MCF 10A (cell line): ENCODE measurements at regions of chr1 and their contacts with region 1.

Region 1: DNA sequence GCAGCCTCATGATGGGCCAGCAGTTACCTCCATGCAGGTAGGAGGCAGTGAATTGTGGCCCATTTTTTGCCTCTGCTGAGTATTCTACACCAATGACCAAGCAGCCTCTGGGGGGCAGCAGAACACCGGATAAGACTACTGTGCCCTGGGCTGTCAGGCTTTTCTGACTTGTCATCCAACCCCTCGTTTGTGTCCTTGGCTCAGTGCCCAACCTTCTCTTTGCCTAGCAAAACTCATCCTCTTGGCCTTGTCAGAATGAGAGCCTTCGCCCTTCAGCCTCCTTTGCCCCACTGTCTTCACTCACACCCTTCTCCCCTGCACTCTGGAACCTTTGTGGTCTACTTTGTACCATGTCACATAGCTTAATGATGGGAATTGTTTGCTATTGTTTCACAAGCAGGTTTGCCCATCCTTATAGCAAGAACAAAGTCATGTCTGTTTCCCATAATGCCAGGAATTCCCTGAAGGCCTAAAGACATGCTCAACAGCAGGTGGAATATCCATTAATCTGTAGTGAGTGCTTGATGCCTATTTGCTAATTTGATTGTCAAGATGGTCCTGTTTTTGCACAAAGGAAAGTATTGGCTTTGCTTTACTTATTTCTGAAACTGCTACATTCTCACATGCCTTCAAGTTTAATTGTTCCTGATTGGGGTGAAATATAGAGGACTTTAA is 255.9 kb downstream of the HHAT start:
- DNase-seq: peak; percentile 97
- H3K4me3 Mint-ChIP-seq: no peak overlapping the region
- H3K27ac Mint-ChIP-seq: no peak overlapping the region
- H3K4me1 Mint-ChIP-seq: peaks cover 6% of the 10 kb centered on the region
- H3K27me3 Mint-ChIP-seq: no peaks in the 10 kb centered on the region
- CTCF ChIP-seq: peak; percentile 100

Region 2: GRCh38 chr1:210448297-210448892 is 136.2 kb before region 1 on chr1:
- CTCF ChIA-PET with region 1: interaction called, 92 read pairs
- POLR2A ChIA-PET with region 1: interaction called, 3 read pairs
- intact Hi-C with region 1: loop called (anchors 1 kb)
- DNase-seq: peak; percentile 71
- H3K4me3 Mint-ChIP-seq: no peak overlapping the region
- H3K27ac Mint-ChIP-seq: no peak overlapping the region
- H3K4me1 Mint-ChIP-seq: peaks cover 11% of the 10 kb centered on the region
- H3K27me3 Mint-ChIP-seq: peaks cover 52% of the 10 kb centered on the region
- CTCF ChIP-seq: peak; percentile 93

Region 3: GRCh38 chr1:210607361-210607760 is 22.8 kb after region 1 on chr1:
- CTCF ChIA-PET with region 1: no interaction called
- POLR2A ChIA-PET with region 1: no interaction called
- intact Hi-C with region 1: no loop called
- DNase-seq: no peak
- H3K4me3 Mint-ChIP-seq: no peak overlapping the region
- H3K27ac Mint-ChIP-seq: no peak overlapping the region
- H3K4me1 Mint-ChIP-seq: peaks cover 5% of the 10 kb centered on the region
- H3K27me3 Mint-ChIP-seq: no peaks in the 10 kb centered on the region
- CTCF ChIP-seq: no peak

Region 4: GRCh38 chr1:210711825-210712612 is 127.4 kb after region 1 on chr1:
- CTCF ChIA-PET with region 1: interaction called, 4 read pairs
- POLR2A ChIA-PET with region 1: no interaction called
- intact Hi-C with region 1: loop called (anchors 10 kb)
- DNase-seq: peak; percentile 39
- H3K4me3 Mint-ChIP-seq: no peak overlapping the region
- H3K27ac Mint-ChIP-seq: no peak overlapping the region
- H3K4me1 Mint-ChIP-seq: peaks cover 6% of the 10 kb centered on the region
- H3K27me3 Mint-ChIP-seq: no peaks in the 10 kb centered on the region
- CTCF ChIP-seq: peak; percentile 25

Region 5: DNA sequence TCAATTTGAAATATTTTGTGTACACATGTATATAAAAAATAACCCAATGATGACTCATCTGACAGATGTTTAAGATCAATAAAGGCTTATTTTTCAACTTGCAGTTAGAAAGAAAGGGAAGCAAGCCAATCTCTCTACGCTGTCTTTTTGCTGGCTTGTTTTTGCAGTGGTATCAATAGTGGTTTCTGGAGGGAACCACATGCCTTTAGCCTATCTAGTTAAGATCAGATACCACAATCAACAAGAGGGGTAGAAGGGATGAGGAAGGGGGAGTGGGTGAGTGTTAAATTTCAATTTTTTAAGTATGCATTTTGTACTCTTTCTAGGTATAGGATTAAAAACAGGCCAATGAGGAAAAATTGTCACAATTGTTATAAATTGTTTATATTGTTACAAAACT is 273.1 kb after region 1 on chr1:
- CTCF ChIA-PET with region 1: no interaction called
- POLR2A ChIA-PET with region 1: no interaction called
- intact Hi-C with region 1: no loop called
- DNase-seq: no peak
- H3K4me3 Mint-ChIP-seq: no peak overlapping the region
- H3K27ac Mint-ChIP-seq: no peak overlapping the region
- H3K4me1 Mint-ChIP-seq: no peaks in the 10 kb centered on the region
- H3K27me3 Mint-ChIP-seq: no peaks in the 10 kb centered on the region
- CTCF ChIP-seq: no peak

Region 6: GRCh38 chr1:211009944-211010343 is 425.4 kb after region 1 on chr1:
- CTCF ChIA-PET with region 1: interaction called, 6 read pairs
- POLR2A ChIA-PET with region 1: no interaction called
- intact Hi-C with region 1: loop called (anchors 5 kb)
- DNase-seq: no peak
- H3K4me3 Mint-ChIP-seq: no peak overlapping the region
- H3K27ac Mint-ChIP-seq: no peak overlapping the region
- H3K4me1 Mint-ChIP-seq: no peaks in the 10 kb centered on the region
- H3K27me3 Mint-ChIP-seq: peaks cover 15% of the 10 kb centered on the region
- CTCF ChIP-seq: no peak

Region 7: GRCh38 chr1:211145944-211146343 is 561.4 kb after region 1 on chr1:
- CTCF ChIA-PET with region 1: interaction called, 10 read pairs
- POLR2A ChIA-PET with region 1: no interaction called
- intact Hi-C with region 1: no loop called
- DNase-seq: peak; percentile 38
- H3K4me3 Mint-ChIP-seq: no peak overlapping the region
- H3K27ac Mint-ChIP-seq: no peak overlapping the region
- H3K4me1 Mint-ChIP-seq: peaks cover 6% of the 10 kb centered on the region
- H3K27me3 Mint-ChIP-seq: peaks cover 4% of the 10 kb centered on the region
- CTCF ChIP-seq: no peak

Region 8: DNA sequence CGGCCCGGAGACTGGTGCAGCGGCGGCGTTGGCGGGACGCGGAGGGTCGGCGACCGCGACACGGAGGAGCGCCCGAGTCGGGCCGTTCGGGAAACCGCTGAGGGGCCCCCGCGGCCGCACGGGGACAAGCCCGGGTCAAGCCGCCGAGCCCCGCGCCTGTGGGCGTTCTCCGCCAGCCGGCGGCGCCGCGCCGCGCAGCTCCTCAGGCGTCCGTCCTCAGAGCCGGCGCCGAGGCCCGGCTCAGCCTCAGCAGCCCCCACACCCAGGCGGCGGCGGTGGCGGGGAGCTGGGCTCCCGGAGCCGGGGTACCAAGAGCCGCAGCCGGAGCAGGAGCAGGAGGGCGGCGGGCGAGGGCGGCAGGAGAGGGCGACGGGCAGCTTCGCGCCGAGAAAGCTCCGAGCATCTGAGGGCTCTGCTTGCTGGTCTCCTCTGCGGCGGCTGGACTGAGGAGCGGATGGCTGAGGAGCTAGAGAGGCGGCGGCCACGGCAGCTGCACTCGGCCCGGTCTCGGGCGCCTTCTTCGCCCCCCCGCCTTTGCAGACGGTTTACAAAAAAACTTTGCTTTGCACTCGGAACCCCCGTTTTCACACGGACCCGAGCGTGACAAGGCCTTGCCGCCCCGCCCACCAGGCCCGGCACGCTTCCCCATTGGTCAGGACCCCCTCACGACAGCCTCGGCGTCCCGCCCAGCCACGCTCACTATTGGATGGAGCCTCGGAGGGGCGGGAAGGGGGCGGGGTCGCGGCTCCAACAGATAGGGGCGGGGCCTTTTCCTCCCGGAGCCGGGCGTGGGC is 994.3 kb after region 1 on chr1 and contains the start of gene SLC30A1:
- CTCF ChIA-PET with region 1: no interaction called
- POLR2A ChIA-PET with region 1: no interaction called
- intact Hi-C with region 1: loop called (anchors 10 kb)
- DNase-seq: peak; percentile 100
- H3K4me3 Mint-ChIP-seq: peak within 1 kb of the TSS; percentile 89
- H3K27ac Mint-ChIP-seq: peak within 1 kb of the TSS; percentile 96
- H3K4me1 Mint-ChIP-seq: peaks cover 48% of the 10 kb centered on the region
- H3K27me3 Mint-ChIP-seq: no peaks in the 10 kb centered on the region
- CTCF ChIP-seq: no peak
- total RNA-seq, gene SLC30A1: 87.0 and 94.1 TPM in 2 replicates